HepG2 (cell line): ENCODE measurements at regions of chr18 and their contacts with region 1.

Region 1: DNA sequence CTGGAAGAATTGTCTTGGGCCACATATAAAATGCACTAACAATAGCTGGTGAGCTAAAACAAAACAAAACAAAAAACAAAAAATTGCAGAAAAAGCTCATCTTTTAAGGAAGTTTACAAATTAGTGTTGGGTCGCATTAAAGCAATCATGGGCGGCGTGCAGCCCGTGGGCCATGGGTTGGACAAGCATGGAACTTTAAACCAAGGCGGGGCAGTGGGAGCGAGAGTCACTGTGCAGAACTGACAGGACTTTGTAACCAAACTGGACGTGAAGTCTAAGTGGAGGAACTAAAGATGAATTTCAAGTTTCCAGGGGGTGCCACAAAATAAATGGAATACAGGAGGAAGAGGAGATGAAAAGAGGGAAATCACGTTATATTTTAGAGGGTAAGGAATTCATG is 80.7 kb downstream of the PSMG2 start:
- DNase-seq: peak; percentile 39
- ATAC-seq: peak; percentile 90
- H3K4me3 ChIP-seq: no peak overlapping the region
- H3K27ac ChIP-seq: no peak overlapping the region
- H3K4me1 ChIP-seq: peaks cover 34% of the 10 kb centered on the region
- H3K27me3 ChIP-seq: no peaks in the 10 kb centered on the region
- CTCF ChIP-seq: no peak
- EP300 ChIP-seq: no peak
- POLR2A ChIP-seq: no peak
- RAD21 ChIP-seq: no peak

Region 2: GRCh38 chr18:11826836-11827235 is 956.7 kb before region 1 on chr18:
- CTCF ChIA-PET with region 1: no interaction called
- POLR2A ChIA-PET with region 1: no interaction called
- in situ Hi-C with region 1: no loop called
- intact Hi-C with region 1: no loop called
- DNase-seq: peak; percentile 34
- ATAC-seq: peak; percentile 94
- H3K4me3 ChIP-seq: no peak overlapping the region
- H3K27ac ChIP-seq: no peak overlapping the region
- H3K4me1 ChIP-seq: no peaks in the 10 kb centered on the region
- H3K27me3 ChIP-seq: no peaks in the 10 kb centered on the region
- CTCF ChIP-seq: peak; percentile 82
- EP300 ChIP-seq: no peak
- POLR2A ChIP-seq: no peak
- RAD21 ChIP-seq: peak; percentile 83

Region 3: GRCh38 chr18:12768625-12769024 is 14.9 kb before region 1 on chr18:
- CTCF ChIA-PET with region 1: no interaction called
- POLR2A ChIA-PET with region 1: no interaction called
- in situ Hi-C with region 1: no loop called
- intact Hi-C with region 1: loop called (anchors 2 kb)
- DNase-seq: no peak
- ATAC-seq: no peak
- H3K4me3 ChIP-seq: no peak overlapping the region; a peak in 1 of 6 replicates
- H3K27ac ChIP-seq: no peak overlapping the region
- H3K4me1 ChIP-seq: peaks cover 39% of the 10 kb centered on the region
- H3K27me3 ChIP-seq: no peaks in the 10 kb centered on the region
- CTCF ChIP-seq: no peak
- EP300 ChIP-seq: no peak
- POLR2A ChIP-seq: no peak
- RAD21 ChIP-seq: no peak

Region 4: GRCh38 chr18:12838178-12838634 is 54.7 kb after region 1 on chr18:
- CTCF ChIA-PET with region 1: no interaction called
- POLR2A ChIA-PET with region 1: no interaction called
- in situ Hi-C with region 1: no loop called
- intact Hi-C with region 1: loop called (anchors 10 kb)
- DNase-seq: peak; percentile 90
- ATAC-seq: peak; percentile 98
- H3K4me3 ChIP-seq: peak overlapping the region in 2 of 3 experiments; percentile 23 to 37; a peak in 4 of 6 replicates
- H3K27ac ChIP-seq: peak overlapping the region; percentile 85
- H3K4me1 ChIP-seq: peaks cover 24% of the 10 kb centered on the region
- H3K27me3 ChIP-seq: no peaks in the 10 kb centered on the region
- CTCF ChIP-seq: no peak
- EP300 ChIP-seq: peak; percentile 22 to 69; a peak in 2 of 4 replicates
- POLR2A ChIP-seq: no peak
- RAD21 ChIP-seq: no peak